MCF 10A (cell line): ENCODE measurements at regions of chr10 and their contacts with region 1.

Region 1: GRCh38 chr10:97612386-97612785 is 20.9 kb downstream of the MORN4 start:
- DNase-seq: peak; percentile 74
- H3K4me3 Mint-ChIP-seq: no peak overlapping the region
- H3K27ac Mint-ChIP-seq: no peak overlapping the region
- H3K4me1 Mint-ChIP-seq: peaks cover 12% of the 10 kb centered on the region
- H3K27me3 Mint-ChIP-seq: no peaks in the 10 kb centered on the region
- CTCF ChIP-seq: peak; percentile 48

Region 2: GRCh38 chr10:97407211-97407951 is 205.0 kb before region 1 on chr10:
- CTCF ChIA-PET with region 1: interaction called, 5 read pairs
- POLR2A ChIA-PET with region 1: interaction called, 5 read pairs
- intact Hi-C with region 1: loop called (anchors 1 kb)
- DNase-seq: peak; percentile 85
- H3K4me3 Mint-ChIP-seq: no peak overlapping the region
- H3K27ac Mint-ChIP-seq: no peak overlapping the region
- H3K4me1 Mint-ChIP-seq: no peaks in the 10 kb centered on the region
- H3K27me3 Mint-ChIP-seq: no peaks in the 10 kb centered on the region
- CTCF ChIP-seq: peak; percentile 76

Region 3: GRCh38 chr10:97463363-97464132 is 148.8 kb before region 1 on chr10:
- CTCF ChIA-PET with region 1: interaction called, 204 read pairs
- POLR2A ChIA-PET with region 1: interaction called, 15 read pairs
- intact Hi-C with region 1: loop called (anchors 1 kb)
- DNase-seq: peak; percentile 74
- H3K4me3 Mint-ChIP-seq: no peak overlapping the region
- H3K27ac Mint-ChIP-seq: peak overlapping the region; percentile 46
- H3K4me1 Mint-ChIP-seq: peaks cover 16% of the 10 kb centered on the region
- H3K27me3 Mint-ChIP-seq: no peaks in the 10 kb centered on the region
- CTCF ChIP-seq: peak; percentile 79

Region 4: GRCh38 chr10:97534746-97535367 is 77.5 kb before region 1 on chr10:
- CTCF ChIA-PET with region 1: interaction called, 19 read pairs
- POLR2A ChIA-PET with region 1: interaction called, 4 read pairs
- intact Hi-C with region 1: no loop called
- DNase-seq: peak; percentile 71
- H3K4me3 Mint-ChIP-seq: no peak overlapping the region
- H3K27ac Mint-ChIP-seq: no peak overlapping the region
- H3K4me1 Mint-ChIP-seq: peaks cover 10% of the 10 kb centered on the region
- H3K27me3 Mint-ChIP-seq: no peaks in the 10 kb centered on the region
- CTCF ChIP-seq: peak; percentile 56

Region 5: DNA sequence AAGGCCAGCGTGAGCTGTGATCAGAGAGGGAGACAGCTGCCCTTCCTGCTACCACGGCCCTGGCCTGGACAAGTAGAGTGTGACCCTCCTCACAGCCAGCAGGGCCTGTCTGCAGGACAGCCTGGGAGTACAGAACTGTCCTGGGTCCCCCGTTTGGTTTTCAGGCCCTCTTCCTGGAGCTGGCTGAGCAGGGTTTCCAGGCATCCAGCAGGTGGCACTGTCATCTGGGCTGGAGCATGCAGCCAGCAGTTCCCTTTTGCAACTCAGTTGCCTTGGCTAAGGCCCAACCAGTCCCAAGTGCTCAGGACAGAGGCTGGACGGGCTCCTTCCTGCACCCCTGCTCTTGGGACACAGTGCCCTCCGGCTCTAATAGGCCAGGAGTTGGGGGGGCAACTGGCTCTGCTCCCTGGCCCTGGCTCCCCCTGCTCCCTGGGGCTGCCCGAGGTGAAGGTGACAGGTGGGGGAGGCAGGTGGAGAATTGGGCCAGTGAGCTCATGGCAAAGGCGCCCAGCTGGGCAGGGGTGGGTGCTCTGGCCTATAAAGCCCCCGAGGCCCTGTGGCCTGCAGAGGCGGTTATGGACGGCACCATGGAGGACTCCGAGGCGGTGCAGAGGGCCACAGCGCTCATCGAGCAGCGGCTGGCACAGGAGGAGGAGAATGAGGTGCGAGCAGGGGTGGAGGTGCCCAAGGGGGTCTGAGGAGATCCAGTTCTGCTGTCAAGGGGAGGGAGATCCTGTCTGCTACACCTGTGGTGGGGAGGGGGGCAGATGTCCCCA is 40.0 kb before region 1 on chr10 and contains the start of gene ANKRD2:
- CTCF ChIA-PET with region 1: interaction called, 373 read pairs
- POLR2A ChIA-PET with region 1: interaction called, 184 read pairs
- intact Hi-C with region 1: loop called (anchors 1 kb)
- DNase-seq: peak; percentile 89
- H3K4me3 Mint-ChIP-seq: peak within 1 kb of the TSS; percentile 50
- H3K27ac Mint-ChIP-seq: peak within 1 kb of the TSS; percentile 57
- H3K4me1 Mint-ChIP-seq: peaks cover 40% of the 10 kb centered on the region
- H3K27me3 Mint-ChIP-seq: no peaks in the 10 kb centered on the region
- CTCF ChIP-seq: peak; percentile 91
- total RNA-seq, gene ANKRD2: 1.8 and 5.8 TPM in 2 replicates

Region 6: DNA sequence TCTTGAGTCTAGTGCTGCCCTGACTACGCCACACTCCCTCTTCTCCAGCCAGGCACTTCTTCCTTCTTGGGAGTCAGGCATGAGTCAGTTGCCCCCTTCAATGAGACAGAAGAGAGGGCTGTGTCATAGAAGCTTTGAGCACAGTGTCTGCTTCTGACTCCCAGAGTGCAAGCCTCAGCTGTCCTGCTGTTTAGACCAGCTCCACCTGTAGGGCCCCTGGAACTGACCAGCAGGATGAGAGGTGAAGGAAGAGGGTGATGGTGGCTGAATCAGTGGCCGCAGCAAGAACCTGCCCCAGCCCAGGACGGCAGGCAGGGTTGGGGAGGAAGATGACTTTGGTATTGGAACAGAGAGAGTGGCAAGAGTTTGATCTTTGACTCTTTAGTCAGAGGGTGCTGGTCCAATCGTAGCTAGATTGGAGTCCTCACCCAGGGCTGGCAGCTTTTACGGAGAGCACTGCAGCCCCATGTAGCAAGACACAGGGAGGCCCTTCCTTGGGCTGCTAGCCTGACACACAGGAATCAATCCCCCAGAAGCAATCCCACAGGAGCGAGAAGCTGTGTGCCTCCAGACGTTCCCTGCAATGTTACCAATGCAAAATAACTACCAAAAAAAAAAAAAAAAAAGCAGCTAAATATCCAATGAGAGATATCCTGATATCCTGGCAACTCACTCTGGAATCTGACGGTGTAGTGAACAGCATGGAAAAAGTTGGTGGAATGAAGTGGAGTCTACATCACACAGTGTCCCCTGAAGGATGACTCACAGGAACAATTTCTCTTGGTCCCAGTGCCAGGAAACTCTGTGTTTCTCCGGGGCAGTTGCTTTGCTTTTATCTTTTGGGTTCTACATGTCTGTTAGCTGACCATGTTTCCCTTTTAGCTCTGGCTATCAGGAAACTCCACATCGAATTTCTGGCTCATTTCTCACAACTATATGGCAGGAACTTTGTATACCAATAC is 16.0 kb before region 1 on chr10:
- CTCF ChIA-PET with region 1: interaction called, 35 read pairs
- POLR2A ChIA-PET with region 1: interaction called, 26 read pairs
- intact Hi-C with region 1: no loop called
- DNase-seq: peak; percentile 80
- H3K4me3 Mint-ChIP-seq: peak overlapping the region; percentile 13
- H3K27ac Mint-ChIP-seq: peak overlapping the region; percentile 70
- H3K4me1 Mint-ChIP-seq: peaks cover 29% of the 10 kb centered on the region
- H3K27me3 Mint-ChIP-seq: no peaks in the 10 kb centered on the region
- CTCF ChIP-seq: no peak

Region 7: GRCh38 chr10:97631098-97631497 is 18.7 kb after region 1 on chr10:
- CTCF ChIA-PET with region 1: interaction called, 38 read pairs
- POLR2A ChIA-PET with region 1: interaction called, 3 read pairs
- intact Hi-C with region 1: no loop called
- DNase-seq: no peak
- H3K4me3 Mint-ChIP-seq: no peak overlapping the region
- H3K27ac Mint-ChIP-seq: no peak overlapping the region
- H3K4me1 Mint-ChIP-seq: no peaks in the 10 kb centered on the region
- H3K27me3 Mint-ChIP-seq: no peaks in the 10 kb centered on the region
- CTCF ChIP-seq: no peak